Tibial artery (tissue), 4 donors: ENCODE measurements at regions of chr15 and their contacts with region 1.

Region 1: DNA sequence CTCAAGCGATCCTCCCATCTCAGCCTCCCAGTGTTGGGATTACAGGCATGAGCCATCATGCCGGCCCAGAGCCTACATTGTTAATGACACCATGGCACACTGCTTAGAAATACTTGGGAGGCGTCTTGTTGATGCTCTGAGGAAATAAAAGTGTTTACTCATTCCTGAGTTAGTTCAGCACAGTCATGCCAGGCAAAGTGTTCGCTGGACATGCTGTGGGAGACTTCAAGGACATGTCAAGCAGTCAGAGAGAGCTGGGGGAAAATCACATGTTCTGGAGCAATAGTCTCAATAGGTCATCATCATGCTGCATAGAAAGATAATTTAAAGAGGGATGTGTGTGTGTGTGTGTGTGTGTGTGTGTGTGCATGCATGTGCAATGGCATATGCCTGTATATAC is 37.5 kb downstream of the TTC23 start:
- DNase-seq: no peak
- H3K4me3 ChIP-seq: no peak overlapping the region
- H3K27ac ChIP-seq: peak overlapping the region in 1 of 2 donors; percentile 21
- H3K4me1 ChIP-seq: peaks cover 0 to 8% (median 0%) of the 10 kb centered on the region in 4 donors
- H3K27me3 ChIP-seq: no peaks in the 10 kb centered on the region
- CTCF ChIP-seq: no peak

Region 2: DNA sequence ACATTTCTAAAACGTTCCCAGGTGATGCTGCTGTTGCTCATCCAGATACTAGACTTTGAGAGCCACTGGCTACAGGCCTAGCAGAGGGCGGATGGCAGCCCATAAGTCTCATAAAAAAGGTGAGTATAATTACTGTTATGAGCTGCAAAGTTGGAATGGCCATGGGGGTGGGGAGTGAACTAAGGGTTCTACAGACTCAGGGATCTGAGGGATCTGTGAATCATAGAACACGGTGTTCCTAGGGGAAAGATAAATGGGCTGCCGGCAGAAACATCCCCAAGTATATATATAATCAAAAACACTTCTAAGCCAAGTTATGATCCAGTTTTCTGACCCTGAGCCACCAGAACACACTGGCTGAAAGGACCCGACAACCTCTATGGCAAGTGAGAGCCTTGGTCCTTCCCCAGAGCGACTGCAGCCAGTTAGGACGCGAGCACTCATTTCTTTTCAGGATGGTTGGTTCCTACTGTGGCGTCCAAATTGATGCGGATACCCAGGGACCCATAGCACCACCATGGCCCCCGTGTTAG is 115.0 kb before region 1 on chr15:
- intact Hi-C with region 1: loop called (anchors 2 kb)
- DNase-seq: no peak
- H3K4me3 ChIP-seq: no peak overlapping the region
- H3K27ac ChIP-seq: no peak overlapping the region
- H3K4me1 ChIP-seq: peaks cover 0 to 9% (median 6%) of the 10 kb centered on the region in 4 donors
- H3K27me3 ChIP-seq: no peaks in the 10 kb centered on the region
- CTCF ChIP-seq: no peak